ENCODE measurements at regions of chr1 and their contacts with region 1.

Region 1: GRCh38 chr1:50704126-50704525 is 255.9 kb downstream of the FAF1 start:
- DNase-seq: peak in 3 of 14 experiments; percentile 30 to 39 (median 35)
- ATAC-seq: no peak
- H3K4me3 ChIP-seq: no peak overlapping the region
- H3K4me3 Mint-ChIP-seq: no peak overlapping the region
- H3K27ac ChIP-seq: no peak overlapping the region
- H3K27ac Mint-ChIP-seq: no peak overlapping the region
- H3K4me1 ChIP-seq: no peaks in the 10 kb centered on the region
- H3K4me1 Mint-ChIP-seq: peaks cover 4% of the 10 kb centered on the region
- H3K27me3 ChIP-seq: no peaks in the 10 kb centered on the region
- H3K27me3 Mint-ChIP-seq: no peaks in the 10 kb centered on the region
- CTCF ChIP-seq: peak; percentile 71

Region 2: GRCh38 chr1:50318428-50318827 is 385.7 kb before region 1 on chr1:
- CTCF ChIA-PET with region 1: no interaction called
- POLR2A ChIA-PET with region 1: no interaction called
- intact Hi-C with region 1: no loop called
- DNase-seq: no peak
- ATAC-seq: no peak
- H3K4me3 ChIP-seq: no peak overlapping the region
- H3K4me3 Mint-ChIP-seq: no peak overlapping the region
- H3K27ac ChIP-seq: no peak overlapping the region
- H3K27ac Mint-ChIP-seq: no peak overlapping the region
- H3K4me1 ChIP-seq: no peaks in the 10 kb centered on the region
- H3K4me1 Mint-ChIP-seq: no peaks in the 10 kb centered on the region
- H3K27me3 ChIP-seq: no peaks in the 10 kb centered on the region
- H3K27me3 Mint-ChIP-seq: peaks cover 20% of the 10 kb centered on the region
- CTCF ChIP-seq: no peak

Region 3: DNA sequence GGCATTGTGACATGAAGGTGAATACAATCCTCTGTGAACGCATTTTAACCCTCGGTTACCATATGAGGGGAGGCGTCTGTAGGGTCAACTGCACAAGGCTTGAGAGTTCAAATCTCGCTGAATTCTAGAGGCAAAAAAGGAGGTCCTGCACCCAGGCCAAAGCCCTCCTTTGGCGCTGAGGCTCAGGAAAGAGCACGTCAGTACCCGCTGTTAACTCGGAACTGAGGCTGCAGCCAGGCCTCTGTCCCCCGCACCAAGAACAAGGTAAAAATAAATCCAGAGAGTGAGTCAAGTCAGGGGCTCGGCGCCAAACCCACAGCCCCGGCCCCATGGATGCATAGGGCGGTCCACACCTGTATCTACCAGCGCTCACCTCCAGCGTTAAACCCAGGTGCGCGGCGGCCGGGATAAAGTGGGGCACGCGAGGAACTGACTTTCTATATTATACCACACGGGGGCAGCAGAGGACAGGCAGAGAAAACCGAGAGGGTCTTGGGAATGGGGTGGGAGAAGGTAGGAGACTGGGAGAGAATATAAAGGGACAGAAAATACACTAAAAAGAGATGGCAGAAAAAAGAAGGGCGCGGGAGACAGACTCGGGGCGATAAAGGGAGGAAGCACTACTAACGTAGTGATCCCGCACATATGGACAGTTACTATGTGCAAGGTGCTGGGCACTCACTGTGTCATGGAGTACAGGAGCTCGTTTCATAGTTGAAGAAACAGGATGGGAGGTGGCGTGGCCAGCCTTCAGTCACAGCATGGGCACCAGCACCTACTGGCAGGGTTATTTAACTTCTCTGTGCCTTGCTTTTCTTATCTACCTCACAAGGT is 335.7 kb before region 1 on chr1:
- CTCF ChIA-PET with region 1: no interaction called
- POLR2A ChIA-PET with region 1: no interaction called
- intact Hi-C with region 1: loop called in 1 of 2 experiments (anchors 2 kb)
- DNase-seq: peak in 6 of 14 experiments; percentile 4 to 37 (median 14)
- ATAC-seq: no peak
- H3K4me3 ChIP-seq: no peak overlapping the region
- H3K4me3 Mint-ChIP-seq: no peak overlapping the region
- H3K27ac ChIP-seq: no peak overlapping the region
- H3K27ac Mint-ChIP-seq: no peak overlapping the region
- H3K4me1 ChIP-seq: peaks cover 6% of the 10 kb centered on the region
- H3K4me1 Mint-ChIP-seq: no peaks in the 10 kb centered on the region
- H3K27me3 ChIP-seq: peaks cover 22 to 26% of the 10 kb centered on the region in 2 experiments
- H3K27me3 Mint-ChIP-seq: peaks cover 60% of the 10 kb centered on the region
- CTCF ChIP-seq: peak; percentile 51

Region 4: DNA sequence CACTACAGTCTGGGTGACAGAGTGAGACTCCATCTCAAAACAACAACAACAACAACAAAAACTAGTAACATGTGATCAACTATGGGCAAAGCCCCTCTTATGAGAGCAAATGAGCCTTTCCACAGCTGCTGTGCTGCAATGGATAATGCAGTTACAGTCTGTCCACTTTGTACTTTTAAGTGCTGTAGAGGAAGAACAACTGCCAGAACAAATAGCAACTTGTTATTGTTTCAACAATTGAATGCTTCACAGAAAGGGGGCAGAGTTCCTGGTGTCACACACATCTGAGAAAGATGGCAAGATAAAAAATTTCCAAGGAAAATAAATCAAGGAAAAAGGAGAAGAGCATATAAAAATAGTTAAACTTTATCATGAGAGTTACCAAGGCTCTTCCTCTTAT is 37.3 kb before region 1 on chr1:
- CTCF ChIA-PET with region 1: no interaction called
- POLR2A ChIA-PET with region 1: no interaction called
- intact Hi-C with region 1: no loop called
- DNase-seq: no peak
- ATAC-seq: no peak
- H3K4me3 ChIP-seq: no peak overlapping the region
- H3K4me3 Mint-ChIP-seq: no peak overlapping the region
- H3K27ac ChIP-seq: no peak overlapping the region
- H3K27ac Mint-ChIP-seq: no peak overlapping the region
- H3K4me1 ChIP-seq: no peaks in the 10 kb centered on the region
- H3K4me1 Mint-ChIP-seq: no peaks in the 10 kb centered on the region
- H3K27me3 ChIP-seq: no peaks in the 10 kb centered on the region
- H3K27me3 Mint-ChIP-seq: no peaks in the 10 kb centered on the region
- CTCF ChIP-seq: no peak

Region 5: DNA sequence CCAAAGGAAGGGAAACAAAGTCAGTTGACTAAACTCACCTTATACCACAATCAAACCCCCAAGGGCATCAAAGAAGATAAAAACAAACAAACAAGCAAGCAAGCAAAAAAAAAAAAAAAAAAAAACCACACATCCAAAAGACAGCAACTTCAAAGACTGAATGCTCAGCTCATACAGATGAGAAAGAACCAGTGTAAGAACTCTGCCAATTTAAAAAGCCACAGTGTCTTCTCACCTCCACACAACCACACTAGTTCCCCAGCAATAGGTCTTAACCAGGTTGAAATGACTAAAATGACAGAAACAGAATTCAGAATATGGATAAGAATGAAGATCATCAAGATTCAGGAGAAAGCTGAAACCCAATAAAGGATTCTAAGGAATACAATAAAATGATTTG is 62.6 kb after region 1 on chr1:
- CTCF ChIA-PET with region 1: no interaction called
- POLR2A ChIA-PET with region 1: no interaction called
- intact Hi-C with region 1: no loop called
- DNase-seq: no peak
- ATAC-seq: no peak
- H3K4me3 ChIP-seq: no peak overlapping the region
- H3K4me3 Mint-ChIP-seq: no peak overlapping the region
- H3K27ac ChIP-seq: no peak overlapping the region
- H3K27ac Mint-ChIP-seq: no peak overlapping the region
- H3K4me1 ChIP-seq: no peaks in the 10 kb centered on the region
- H3K4me1 Mint-ChIP-seq: peaks cover 40% of the 10 kb centered on the region
- H3K27me3 ChIP-seq: no peaks in the 10 kb centered on the region
- H3K27me3 Mint-ChIP-seq: no peaks in the 10 kb centered on the region
- CTCF ChIP-seq: no peak

Measured in CD4-positive, alpha-beta T cell (primary cell).